ENCODE measurements at regions of chr6 and their contacts with region 1.

Region 1: GRCh38 chr6:121430514-121431460 is 4.7 kb upstream of the GJA1 start:
- DNase-seq: peak; percentile 57
- H3K4me3 Mint-ChIP-seq: no peak overlapping the region
- H3K27ac Mint-ChIP-seq: no peak overlapping the region
- H3K4me1 Mint-ChIP-seq: peaks cover 13% of the 10 kb centered on the region
- H3K27me3 Mint-ChIP-seq: no peaks in the 10 kb centered on the region
- CTCF ChIP-seq: peak; percentile 77

Region 2: DNA sequence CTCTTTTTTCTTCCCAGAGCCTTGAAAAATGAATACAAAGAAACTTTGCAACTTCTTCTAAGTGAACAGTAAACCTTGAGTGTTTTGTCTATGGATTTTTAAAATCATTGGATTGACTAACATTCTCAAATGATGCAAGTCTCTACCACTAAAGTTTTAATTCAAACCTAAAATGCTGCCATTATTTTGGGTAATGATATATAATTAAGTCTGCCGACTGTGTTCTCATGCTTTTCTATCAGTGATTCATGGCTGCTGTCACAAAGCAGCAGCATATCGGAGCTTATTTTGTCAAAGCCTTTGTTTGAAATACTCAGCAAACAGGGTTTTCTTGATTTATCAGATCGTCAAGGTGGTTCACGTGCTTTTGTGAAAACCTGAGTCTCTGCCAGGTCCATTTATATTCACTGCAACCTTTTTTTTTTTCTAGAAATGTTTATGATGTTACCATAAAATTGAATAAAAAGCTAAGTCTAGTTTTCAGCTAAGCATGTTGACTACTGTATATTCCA is 100.9 kb after region 1 on chr6:
- CTCF ChIA-PET with region 1: no interaction called
- POLR2A ChIA-PET with region 1: no interaction called
- intact Hi-C with region 1: no loop called
- DNase-seq: no peak
- H3K4me3 Mint-ChIP-seq: no peak overlapping the region
- H3K27ac Mint-ChIP-seq: no peak overlapping the region
- H3K4me1 Mint-ChIP-seq: no peaks in the 10 kb centered on the region
- H3K27me3 Mint-ChIP-seq: no peaks in the 10 kb centered on the region
- CTCF ChIP-seq: no peak

Region 3: GRCh38 chr6:121849477-121849876 is 418.7 kb after region 1 on chr6:
- CTCF ChIA-PET with region 1: interaction called, 15 read pairs
- POLR2A ChIA-PET with region 1: no interaction called
- intact Hi-C with region 1: loop called (anchors 1 kb)
- DNase-seq: peak; percentile 80
- H3K4me3 Mint-ChIP-seq: no peak overlapping the region
- H3K27ac Mint-ChIP-seq: no peak overlapping the region
- H3K4me1 Mint-ChIP-seq: no peaks in the 10 kb centered on the region
- H3K27me3 Mint-ChIP-seq: no peaks in the 10 kb centered on the region
- CTCF ChIP-seq: peak; percentile 87

Region 4: GRCh38 chr6:122033539-122034181 is 602.9 kb after region 1 on chr6:
- CTCF ChIA-PET with region 1: interaction called, 45 read pairs
- POLR2A ChIA-PET with region 1: no interaction called
- intact Hi-C with region 1: loop called (anchors 1 kb)
- DNase-seq: peak; percentile 69
- H3K4me3 Mint-ChIP-seq: no peak overlapping the region
- H3K27ac Mint-ChIP-seq: no peak overlapping the region
- H3K4me1 Mint-ChIP-seq: peaks cover 14% of the 10 kb centered on the region
- H3K27me3 Mint-ChIP-seq: no peaks in the 10 kb centered on the region
- CTCF ChIP-seq: peak; percentile 57

Region 5: DNA sequence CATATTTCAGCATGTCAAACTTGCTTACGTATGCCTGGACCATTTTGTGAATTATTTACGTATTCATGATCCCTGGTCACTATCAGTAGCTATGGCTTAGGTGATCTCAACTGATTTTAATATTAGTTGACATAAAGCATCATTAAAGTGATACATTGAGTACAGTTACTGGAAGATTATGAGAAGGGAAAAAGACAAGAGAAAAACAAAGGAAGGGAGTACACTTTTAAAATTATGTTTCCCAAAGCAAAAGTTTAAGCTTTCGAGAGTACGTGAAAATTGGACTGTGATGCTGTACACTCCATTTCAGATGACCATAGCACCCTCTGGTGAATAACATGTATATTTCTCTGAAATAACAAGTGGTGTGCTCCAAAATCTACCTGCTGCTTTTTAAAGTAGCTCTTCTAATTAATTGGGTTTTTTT is 753.6 kb after region 1 on chr6:
- CTCF ChIA-PET with region 1: interaction called, 12 read pairs
- POLR2A ChIA-PET with region 1: no interaction called
- intact Hi-C with region 1: loop called (anchors 1 kb)
- DNase-seq: peak; percentile 29
- H3K4me3 Mint-ChIP-seq: no peak overlapping the region
- H3K27ac Mint-ChIP-seq: no peak overlapping the region
- H3K4me1 Mint-ChIP-seq: no peaks in the 10 kb centered on the region
- H3K27me3 Mint-ChIP-seq: peaks cover 64% of the 10 kb centered on the region
- CTCF ChIP-seq: no peak

Region 6: GRCh38 chr6:122372647-122373046 is 941.9 kb after region 1 on chr6:
- CTCF ChIA-PET with region 1: no interaction called
- POLR2A ChIA-PET with region 1: no interaction called
- intact Hi-C with region 1: loop called (anchors 1 kb)
- DNase-seq: no peak
- H3K4me3 Mint-ChIP-seq: no peak overlapping the region
- H3K27ac Mint-ChIP-seq: no peak overlapping the region
- H3K4me1 Mint-ChIP-seq: peaks cover 9% of the 10 kb centered on the region
- H3K27me3 Mint-ChIP-seq: peaks cover 40% of the 10 kb centered on the region
- CTCF ChIP-seq: peak; percentile 32